ENCODE measurements at regions of chr12 and their contacts with region 1.

Region 1: DNA sequence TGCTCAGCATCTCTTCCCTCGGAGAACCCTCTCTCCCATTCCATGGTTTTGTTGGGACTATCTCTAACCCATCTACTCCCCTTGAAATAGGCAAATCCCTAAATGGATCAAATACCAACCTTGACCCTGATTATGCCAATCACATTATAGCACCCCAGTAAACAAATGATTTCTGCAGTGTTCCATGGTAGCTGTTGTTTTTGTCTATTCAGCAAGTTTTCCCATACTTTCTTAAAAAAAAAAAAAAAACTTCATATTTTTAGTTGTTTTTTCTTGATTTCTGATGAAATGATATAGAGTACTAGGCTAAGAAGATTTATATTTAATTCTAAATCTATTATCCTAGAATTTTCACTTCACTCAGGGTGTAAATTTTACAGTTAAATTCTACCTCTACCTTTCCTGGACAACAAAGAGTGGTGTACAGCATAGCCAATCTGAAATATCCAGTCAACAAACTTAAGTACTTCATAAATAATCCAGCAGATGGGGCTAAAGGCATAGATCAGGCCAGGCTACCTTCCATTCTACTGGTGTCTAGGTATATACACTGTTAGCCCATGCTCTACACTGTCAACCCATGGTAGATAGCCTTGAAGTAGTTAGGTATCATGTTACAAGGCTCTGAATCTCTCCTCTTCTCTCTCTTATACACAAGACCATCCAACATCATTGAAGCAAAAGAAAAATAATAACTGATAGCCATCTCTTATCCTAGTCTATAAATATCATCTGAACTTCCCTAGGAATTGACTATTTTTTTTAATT is 82.2 kb downstream of the PLEKHG7 start:
- DNase-seq: peak; percentile 78
- H3K4me3 ChIP-seq: no peak overlapping the region
- H3K27ac ChIP-seq: peak overlapping the region; percentile 43
- H3K4me1 ChIP-seq: peaks cover 15% of the 10 kb centered on the region
- H3K27me3 ChIP-seq: no peaks in the 10 kb centered on the region
- CTCF ChIP-seq: peak; percentile 58 to 60

Region 2: DNA sequence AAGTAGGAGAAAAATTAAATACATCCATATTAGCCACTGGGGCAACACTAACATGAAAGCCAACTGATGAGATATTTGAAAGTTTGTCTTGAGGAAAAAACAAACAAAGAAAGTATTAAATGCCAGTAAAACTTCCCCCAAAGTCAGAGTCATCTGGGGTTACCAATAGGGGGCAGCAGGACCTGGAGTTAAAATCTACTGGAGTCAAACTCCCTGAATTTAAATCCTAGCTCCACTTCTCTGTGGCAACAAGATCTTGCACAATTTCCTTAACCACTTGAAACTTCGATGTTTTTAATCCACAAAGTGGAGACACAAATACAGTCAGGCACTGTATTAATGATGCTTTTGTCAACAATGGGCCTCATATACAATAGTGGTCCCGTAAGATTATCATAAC is 67.8 kb before region 1 on chr12:
- CTCF ChIA-PET with region 1: no interaction called
- dilution Hi-C with region 1: no loop called
- in situ Hi-C with region 1: no loop called
- intact Hi-C with region 1: loop called (anchors 1 kb)
- DNase-seq: peak; percentile 23
- H3K4me3 ChIP-seq: no peak overlapping the region
- H3K27ac ChIP-seq: no peak overlapping the region
- H3K4me1 ChIP-seq: no peaks in the 10 kb centered on the region
- H3K27me3 ChIP-seq: no peaks in the 10 kb centered on the region
- CTCF ChIP-seq: peak; percentile 42 to 52

Region 3: DNA sequence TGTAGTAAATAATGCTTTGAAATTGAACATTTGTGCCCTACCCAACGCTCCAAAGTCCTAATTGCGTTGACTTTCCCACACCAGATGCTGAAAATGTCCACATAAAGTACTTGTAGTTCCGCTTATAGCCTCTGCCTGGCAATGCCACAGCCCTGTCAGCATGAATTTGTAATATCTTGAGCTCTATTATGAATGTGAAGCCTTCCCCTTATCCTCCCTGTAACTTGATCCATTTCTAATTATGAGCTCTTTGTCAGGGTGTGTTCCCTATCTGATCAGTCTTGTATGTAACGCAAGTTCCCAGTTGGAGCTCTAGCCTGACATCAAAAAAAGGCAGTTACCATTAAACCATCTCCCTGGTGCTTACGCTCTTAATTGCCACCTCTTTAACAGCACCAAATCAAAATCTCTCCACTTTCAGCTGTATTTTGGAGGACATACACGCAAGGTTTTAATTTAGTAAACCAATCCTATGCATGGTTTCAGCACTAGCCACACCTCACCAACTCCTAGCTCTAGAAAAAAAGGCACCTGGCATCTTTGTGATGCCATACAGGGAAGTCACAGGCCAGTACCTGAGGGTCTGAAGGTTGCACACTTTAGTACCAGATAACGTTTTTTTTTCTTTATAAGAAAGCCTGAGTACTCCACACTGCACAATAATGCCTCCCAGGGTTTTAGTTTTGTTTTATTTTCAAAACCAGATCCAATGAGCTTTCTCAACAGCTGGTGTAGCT is 74.8 kb after region 1 on chr12:
- CTCF ChIA-PET with region 1: no interaction called
- dilution Hi-C with region 1: no loop called
- in situ Hi-C with region 1: no loop called
- intact Hi-C with region 1: no loop called
- DNase-seq: no peak
- H3K4me3 ChIP-seq: no peak overlapping the region
- H3K27ac ChIP-seq: no peak overlapping the region
- H3K4me1 ChIP-seq: no peaks in the 10 kb centered on the region
- H3K27me3 ChIP-seq: no peaks in the 10 kb centered on the region
- CTCF ChIP-seq: no peak

Region 4: DNA sequence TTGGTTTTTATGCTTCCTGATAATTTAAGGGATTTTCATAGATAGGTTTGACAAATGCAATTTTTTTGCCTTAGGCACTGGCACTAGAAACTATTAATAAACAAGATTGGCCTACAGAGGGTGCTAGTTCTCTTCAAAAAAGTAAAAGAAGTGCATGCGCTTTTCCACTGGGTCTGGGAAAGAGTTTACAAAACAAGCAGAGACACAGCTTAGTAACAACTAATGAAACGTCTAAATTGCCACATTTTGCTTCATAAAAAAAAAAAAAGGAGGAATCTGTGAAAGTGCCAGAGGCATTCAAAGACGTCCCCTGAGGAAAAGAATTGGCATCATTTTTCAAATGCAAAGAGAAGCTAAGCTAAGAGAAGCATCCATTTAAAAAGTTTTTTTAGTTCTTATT is 202.4 kb after region 1 on chr12:
- CTCF ChIA-PET with region 1: no interaction called
- dilution Hi-C with region 1: no loop called
- in situ Hi-C with region 1: no loop called
- intact Hi-C with region 1: loop called (anchors 1 kb)
- DNase-seq: peak; percentile 58
- H3K4me3 ChIP-seq: no peak overlapping the region
- H3K27ac ChIP-seq: no peak overlapping the region
- H3K4me1 ChIP-seq: peaks cover 5% of the 10 kb centered on the region
- H3K27me3 ChIP-seq: no peaks in the 10 kb centered on the region
- CTCF ChIP-seq: peak; percentile 45 to 53

Region 5: DNA sequence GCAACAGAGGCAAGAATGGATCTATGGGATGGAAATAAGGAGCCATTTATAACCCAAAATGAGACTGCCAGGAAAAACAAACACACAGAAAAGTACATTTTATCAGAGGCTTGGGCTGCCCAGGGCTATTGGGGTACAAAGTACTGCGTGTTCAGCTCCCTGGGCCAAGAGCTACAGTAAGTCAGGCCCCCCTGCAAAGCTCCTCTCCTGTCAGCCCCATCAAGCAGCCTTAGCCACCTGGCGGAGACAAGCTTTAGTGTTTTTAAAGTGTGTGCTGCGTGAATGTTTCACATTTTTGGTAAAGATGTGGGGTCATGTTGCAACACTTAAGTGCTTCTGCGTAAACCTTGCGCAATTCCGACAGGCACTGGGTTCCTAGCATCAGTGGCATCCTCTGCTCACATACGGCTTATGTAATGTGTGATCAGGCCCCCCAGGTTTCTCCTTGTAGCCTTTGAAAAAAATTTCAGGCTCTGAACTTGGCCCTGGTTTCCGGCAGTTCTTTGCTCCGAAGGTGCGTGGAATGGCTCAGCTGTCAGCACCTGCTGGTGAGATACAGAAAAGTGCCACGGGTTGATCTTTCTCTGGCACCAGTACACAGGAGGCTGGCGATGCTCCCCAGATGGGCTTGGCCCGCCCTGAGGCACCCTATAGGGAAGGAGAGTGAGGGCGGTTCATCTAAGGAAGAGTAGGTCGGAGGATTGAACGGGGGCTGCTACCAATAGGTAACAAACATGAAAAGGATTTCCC is 342.8 kb after region 1 on chr12:
- CTCF ChIA-PET with region 1: no interaction called
- dilution Hi-C with region 1: no loop called
- in situ Hi-C with region 1: no loop called
- intact Hi-C with region 1: loop called (anchors 1 kb)
- DNase-seq: peak; percentile 71
- H3K4me3 ChIP-seq: no peak overlapping the region
- H3K27ac ChIP-seq: no peak overlapping the region
- H3K4me1 ChIP-seq: peaks cover 28% of the 10 kb centered on the region
- H3K27me3 ChIP-seq: no peaks in the 10 kb centered on the region
- CTCF ChIP-seq: peak; percentile 50 to 59

Region 6: GRCh38 chr12:93419388-93420034 is 634.5 kb after region 1 on chr12:
- CTCF ChIA-PET with region 1: no interaction called
- dilution Hi-C with region 1: no loop called
- in situ Hi-C with region 1: loop called in 1 of 2 experiments (anchors 10 kb)
- intact Hi-C with region 1: loop called (anchors 10 kb)
- DNase-seq: peak; percentile 32
- H3K4me3 ChIP-seq: no peak overlapping the region
- H3K27ac ChIP-seq: no peak overlapping the region
- H3K4me1 ChIP-seq: no peaks in the 10 kb centered on the region
- H3K27me3 ChIP-seq: no peaks in the 10 kb centered on the region
- CTCF ChIP-seq: peak; percentile 43 to 55